ENCODE measurements at regions of chr1 and their contacts with region 1.

Region 1: DNA sequence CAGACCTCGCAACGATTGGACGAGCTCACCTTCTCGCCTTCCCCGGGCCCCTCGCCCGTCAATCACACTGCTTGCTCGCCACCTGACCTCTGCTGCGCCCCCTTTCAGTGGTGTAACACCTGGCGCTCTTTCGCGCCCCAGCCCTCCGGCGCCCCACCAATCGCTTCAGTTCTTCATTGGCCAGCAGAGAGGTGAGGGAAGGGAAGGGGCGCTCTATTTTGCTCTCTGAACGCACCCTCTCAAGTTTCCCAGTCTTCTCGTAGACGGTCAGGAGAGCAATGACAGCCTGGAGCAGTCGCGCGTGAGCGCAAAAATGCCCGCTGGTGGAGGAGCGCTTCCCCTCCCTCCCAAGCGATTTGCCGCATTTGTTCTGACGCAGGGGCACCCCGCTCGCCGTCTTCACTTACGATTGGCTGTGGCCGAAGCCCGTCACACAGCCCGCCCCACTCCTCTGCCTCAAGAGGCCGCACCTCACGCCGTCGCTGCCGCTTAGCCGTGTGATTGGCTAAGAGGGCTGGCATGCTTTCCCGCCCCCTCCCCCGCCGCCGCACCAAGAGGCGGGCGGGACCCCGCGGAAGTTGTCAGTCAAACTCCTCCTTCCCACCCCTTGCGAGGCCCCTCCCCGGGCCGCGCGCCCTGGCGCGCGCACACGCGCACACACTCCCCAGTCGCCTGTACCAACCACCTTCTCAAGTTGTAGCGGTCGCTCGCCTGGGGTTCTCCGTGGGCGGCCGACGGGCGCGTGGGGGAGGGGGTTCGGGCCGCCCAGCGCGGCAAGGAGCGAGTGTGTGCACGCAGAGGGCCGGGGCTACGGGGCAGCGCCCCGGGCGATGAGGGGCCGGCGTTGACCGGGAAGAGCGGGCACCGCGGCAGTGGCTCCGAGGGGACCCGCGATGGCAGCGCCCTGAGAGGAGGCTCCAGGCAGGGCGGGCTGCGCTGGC is at the start of gene PPP2R5A:
- DNase-seq: peak; percentile 99
- ATAC-seq: peak; percentile 94 to 97
- total RNA-seq, gene PPP2R5A: 68.4 to 69.0 TPM

Region 2: DNA sequence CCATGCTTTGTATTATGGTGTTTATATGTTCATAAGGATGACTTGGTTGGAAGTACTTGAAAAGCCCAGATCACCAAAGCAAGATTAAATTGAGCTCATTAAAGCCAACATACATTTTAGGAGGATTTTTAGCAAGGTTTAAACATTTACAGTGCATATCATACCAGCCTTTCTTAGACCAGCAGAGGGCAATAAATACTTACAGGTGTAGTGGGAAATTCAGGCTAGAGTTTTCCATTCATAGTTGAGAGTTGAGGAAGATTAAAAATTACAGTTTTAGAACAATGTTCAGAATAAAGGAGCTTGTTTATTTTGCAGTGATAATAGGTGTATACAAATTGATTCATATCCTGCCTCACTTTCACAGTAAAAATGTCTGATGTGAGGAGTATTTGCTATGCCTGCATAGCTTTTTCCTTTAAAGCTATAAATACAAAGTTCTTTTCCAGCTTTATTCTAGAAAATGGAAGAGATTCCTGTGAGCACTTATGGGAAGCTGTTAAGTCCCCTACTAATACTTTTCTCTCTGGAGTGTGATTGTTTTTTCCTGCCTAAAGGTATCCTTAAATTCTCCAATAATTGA is 214.2 kb before region 1 on chr1:
- intact Hi-C with region 1: loop called in 1 of 2 experiments (anchors 5 kb)
- DNase-seq: no peak
- ATAC-seq: peak; percentile 71 to 77

Region 3: GRCh38 chr1:212089560-212090163 is 195.4 kb before region 1 on chr1:
- intact Hi-C with region 1: loop called in 1 of 2 experiments (anchors 5 kb)
- DNase-seq: no peak
- ATAC-seq: no peak

Region 4: GRCh38 chr1:212234431-212235395 is 50.3 kb before region 1 on chr1:
- intact Hi-C with region 1: loop called in 1 of 2 experiments (anchors 5 kb)
- DNase-seq: peak; percentile 54
- ATAC-seq: peak; percentile 97 to 99

Measured in left cardiac atrium (tissue), 4 donors.